Heart left ventricle (tissue), 16 donors: ENCODE measurements at regions of chr12 and their contacts with region 1.

Region 1: GRCh38 chr12:40152783-40153383 is 47.0 kb upstream of the SLC2A13 start:
- DNase-seq: peak in 2 of 5 donors; percentile 30 to 33
- ATAC-seq: no peak
- H3K4me3 ChIP-seq: no peak overlapping the region
- H3K27ac ChIP-seq: no peak overlapping the region
- H3K4me1 ChIP-seq: no peaks in the 10 kb centered on the region
- H3K27me3 ChIP-seq: no peaks in the 10 kb centered on the region
- CTCF ChIP-seq: peak; percentile 68 to 90 (median 81)
- POLR2A ChIP-seq: no peak

Region 2: DNA sequence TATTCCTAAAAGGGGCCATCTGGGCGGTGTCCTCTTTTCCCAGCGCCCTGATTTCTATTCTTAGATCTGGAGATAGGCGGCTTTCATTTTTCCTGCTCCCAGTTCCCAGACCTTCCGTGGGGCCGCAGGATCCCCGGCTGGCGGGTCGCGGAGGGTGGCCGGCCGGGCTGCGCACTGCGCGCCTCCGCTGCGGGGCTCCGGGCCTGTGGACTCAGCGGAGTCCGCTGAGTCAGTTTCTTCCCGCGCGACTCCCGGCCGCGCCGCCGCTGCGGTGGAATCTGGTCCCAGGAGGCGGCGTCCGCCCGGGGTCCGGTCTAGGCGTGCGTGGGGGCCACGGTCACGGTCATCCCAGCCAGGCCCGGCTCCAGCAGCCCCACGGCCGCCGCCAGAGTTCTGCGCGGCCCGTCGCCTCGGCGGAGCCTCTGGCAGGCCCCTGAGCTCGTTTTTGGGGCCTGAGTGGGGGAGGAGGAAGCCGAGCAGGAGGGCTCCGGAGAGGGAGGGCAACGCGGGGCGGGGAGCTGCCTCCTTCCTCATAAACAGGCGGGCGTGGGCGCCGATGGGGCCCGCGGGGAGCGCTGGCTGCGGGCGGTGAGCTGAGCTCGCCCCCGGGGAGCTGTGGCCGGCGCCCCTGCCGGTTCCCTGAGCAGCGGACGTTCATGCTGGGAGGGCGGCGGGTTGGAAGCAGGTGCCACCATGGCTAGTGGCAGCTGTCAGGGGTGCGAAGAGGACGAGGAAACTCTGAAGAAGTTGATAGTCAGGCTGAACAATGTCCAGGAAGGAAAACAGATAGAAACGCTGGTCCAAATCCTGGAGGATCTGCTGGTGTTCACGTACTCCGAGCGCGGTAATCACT is 71.8 kb after region 1 on chr12 and contains the start of gene LRRK2:
- intact Hi-C with region 1: loop called in 3 of 10 experiments (anchors 2 to 10 kb)
- DNase-seq: peak; percentile 86 to 93 (median 89)
- ATAC-seq: peak; percentile 65 to 96 (median 92)
- H3K4me3 ChIP-seq: peak within 1 kb of the TSS; percentile 52 to 82 (median 70)
- H3K27ac ChIP-seq: peak within 1 kb of the TSS; percentile 75 to 98 (median 94)
- H3K4me1 ChIP-seq: peaks cover 0 to 53% (median 9%) of the 10 kb centered on the region in 12 donors
- H3K27me3 ChIP-seq: no peaks in the 10 kb centered on the region
- CTCF ChIP-seq: peak in 2 of 12 donors; percentile 8 to 23
- POLR2A ChIP-seq: peak in 1 of 2 donors; percentile 52
- total RNA-seq, gene LRRK2: 4.4 to 12.3 (median 6.4) TPM

Region 3: DNA sequence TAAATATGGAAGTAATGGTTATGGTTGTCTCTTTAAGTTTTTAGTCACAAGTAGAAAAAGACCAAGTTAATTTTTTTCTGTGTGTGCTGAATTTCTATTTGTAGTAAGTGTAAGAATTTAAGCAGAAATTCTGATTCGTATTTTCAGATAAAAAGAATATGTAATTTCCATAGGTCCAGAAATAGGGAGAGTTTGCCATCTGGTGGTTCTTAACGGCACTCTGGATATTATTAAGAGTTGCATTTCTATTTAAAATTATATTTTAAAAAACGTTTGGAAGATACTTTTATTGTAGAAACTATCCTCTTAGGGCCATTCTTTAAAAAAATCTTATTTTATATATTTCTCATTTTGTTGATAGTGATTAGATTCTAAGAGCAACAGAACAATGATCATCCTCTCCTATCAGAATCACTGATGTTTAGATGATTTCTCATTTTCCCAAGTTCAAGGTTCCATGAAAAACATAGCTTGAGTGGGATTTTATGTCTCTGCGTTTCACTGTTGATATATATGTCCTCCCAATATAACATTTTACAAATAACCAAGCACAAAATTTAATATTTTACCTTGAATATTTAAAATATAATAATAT is 160.2 kb after region 1 on chr12:
- intact Hi-C with region 1: loop called in 8 of 10 experiments (anchors 2 to 10 kb)
- DNase-seq: no peak
- ATAC-seq: no peak
- H3K4me3 ChIP-seq: no peak overlapping the region
- H3K27ac ChIP-seq: no peak overlapping the region
- H3K4me1 ChIP-seq: no peaks in the 10 kb centered on the region
- H3K27me3 ChIP-seq: no peaks in the 10 kb centered on the region
- CTCF ChIP-seq: peak in 10 of 12 donors; percentile 17 to 51 (median 34)
- POLR2A ChIP-seq: no peak

Region 4: DNA sequence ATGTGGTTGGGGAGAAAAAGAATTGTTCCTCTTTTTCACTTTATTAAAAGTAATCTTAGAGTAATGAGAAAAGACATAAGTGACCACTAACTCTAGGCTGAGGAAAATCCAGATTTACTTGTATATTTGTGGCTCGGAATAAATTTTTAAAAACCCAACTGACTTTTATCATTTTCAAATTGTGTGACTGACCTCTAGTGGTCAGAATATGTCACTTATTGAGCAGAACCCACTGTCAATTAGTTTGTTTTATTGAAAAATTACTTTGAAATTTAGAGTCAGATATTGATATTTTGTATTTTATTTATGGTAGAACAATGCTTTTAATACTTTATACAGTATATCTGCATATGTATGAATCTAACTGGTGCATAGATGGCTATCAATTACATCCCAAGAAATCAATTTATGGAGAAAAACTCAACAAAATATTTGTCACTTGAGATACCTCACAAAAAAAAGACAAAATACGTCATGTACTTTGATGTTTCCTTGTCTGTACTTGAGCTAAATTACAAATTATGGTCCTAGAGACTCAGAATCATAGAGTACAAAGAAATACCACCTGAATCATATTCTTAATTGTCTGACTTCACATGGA is 768.8 kb after region 1 on chr12:
- intact Hi-C with region 1: loop called in 1 of 10 experiments (anchors 5 kb)
- DNase-seq: no peak
- ATAC-seq: no peak
- H3K4me3 ChIP-seq: no peak overlapping the region
- H3K27ac ChIP-seq: no peak overlapping the region
- H3K4me1 ChIP-seq: no peaks in the 10 kb centered on the region
- H3K27me3 ChIP-seq: peaks cover 0 to 4% (median 0%) of the 10 kb centered on the region in 9 donors
- CTCF ChIP-seq: peak; percentile 47 to 70 (median 58)
- POLR2A ChIP-seq: no peak